Pancreas (tissue), 10 donors: ENCODE measurements at regions of chr7 and their contacts with region 1.

Region 1: GRCh38 chr7:44240983-44241510 is 40.3 kb downstream of the YKT6 start:
- DNase-seq: peak; percentile 75 to 91 (median 79)
- ATAC-seq: peak; percentile 97 to 99 (median 98)
- H3K4me3 ChIP-seq: peak overlapping the region in 2 of 4 donors; percentile 31 to 33
- H3K27ac ChIP-seq: no peak overlapping the region
- H3K4me1 ChIP-seq: no peaks in the 10 kb centered on the region
- H3K27me3 ChIP-seq: no peaks in the 10 kb centered on the region
- CTCF ChIP-seq: peak; percentile 43 to 70 (median 54)

Region 2: DNA sequence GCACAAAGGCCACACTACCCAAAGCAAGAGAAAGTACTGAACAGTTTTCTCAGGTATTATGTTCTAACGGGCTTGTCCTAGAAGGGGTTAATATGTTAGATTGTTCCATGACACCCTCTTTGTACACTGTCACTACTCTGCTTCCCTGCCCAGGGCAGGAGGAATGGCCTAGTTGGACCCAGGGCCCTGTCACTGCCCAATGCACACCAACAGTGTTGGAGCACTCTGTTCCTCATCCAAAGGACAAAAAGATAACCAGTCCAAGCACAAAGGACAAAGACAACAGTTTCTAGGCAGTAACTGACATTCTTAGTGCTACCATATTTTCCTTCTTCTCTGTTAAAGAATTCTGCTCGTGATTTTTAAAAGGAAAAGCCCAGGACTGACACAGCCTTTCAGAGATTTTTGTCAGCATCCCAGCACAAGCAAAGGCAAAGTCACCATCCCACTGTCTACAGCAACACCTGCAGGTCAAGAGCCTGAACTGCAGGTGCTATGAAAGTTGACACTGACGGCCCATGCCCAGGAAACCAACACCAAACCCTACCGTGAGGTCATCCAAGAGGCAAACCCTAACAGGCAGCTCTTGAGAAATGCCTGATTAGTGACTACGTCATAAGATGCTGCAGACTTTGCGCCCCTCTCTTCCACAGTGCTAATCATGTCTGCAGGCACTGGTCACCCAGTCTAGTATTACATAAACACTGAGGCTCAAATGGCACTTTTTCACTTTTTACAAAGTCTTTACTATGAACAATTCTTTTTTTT is 236.2 kb after region 1 on chr7:
- intact Hi-C with region 1: loop called in 2 of 3 experiments (anchors 5 kb)
- DNase-seq: peak in 5 of 6 donors; percentile 17 to 67 (median 40)
- ATAC-seq: peak; percentile 84 to 98 (median 96)
- H3K4me3 ChIP-seq: no peak overlapping the region
- H3K27ac ChIP-seq: no peak overlapping the region
- H3K4me1 ChIP-seq: peaks cover 0 to 2% (median 0%) of the 10 kb centered on the region in 3 donors
- H3K27me3 ChIP-seq: no peaks in the 10 kb centered on the region
- CTCF ChIP-seq: peak; percentile 69 to 82 (median 74)

Region 3: DNA sequence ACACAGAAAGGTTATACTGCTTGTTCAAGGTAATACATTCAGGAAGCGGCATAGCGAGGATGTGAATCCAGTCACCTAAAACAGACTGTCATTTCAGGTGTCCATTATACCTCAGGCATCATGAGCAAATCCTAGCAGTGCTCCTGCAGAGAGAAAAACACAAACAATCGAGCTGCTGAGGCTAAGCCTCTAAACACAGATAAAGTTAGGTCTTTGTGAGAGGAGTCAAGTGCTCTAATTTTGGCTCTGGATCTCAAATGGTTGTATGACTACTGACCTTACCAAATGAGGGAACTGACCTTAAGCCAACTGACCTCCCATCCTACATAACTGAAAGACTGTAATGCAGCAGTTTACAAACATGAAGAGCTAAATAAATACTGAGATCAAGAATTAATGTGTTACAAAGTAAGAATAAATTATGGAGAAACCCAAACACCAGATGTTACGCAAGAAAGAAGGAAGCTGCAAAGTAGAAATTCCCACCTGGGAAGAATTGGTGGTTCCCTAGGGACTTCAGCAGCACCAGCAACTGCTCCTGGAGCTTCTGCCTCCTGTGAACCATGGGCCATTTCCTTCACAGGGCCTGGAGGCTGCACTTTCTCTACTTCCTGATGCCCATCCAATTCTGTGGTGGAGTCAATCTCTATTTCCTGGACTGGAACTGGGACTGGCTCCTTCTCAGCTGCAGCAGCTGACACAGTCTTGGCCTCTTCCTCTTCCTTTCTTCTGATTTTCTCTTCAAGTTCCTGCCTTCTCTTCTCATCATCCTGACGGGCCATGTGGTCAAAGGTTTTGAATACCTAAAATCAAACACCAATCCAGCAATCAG is 243.7 kb after region 1 on chr7:
- intact Hi-C with region 1: loop called in 2 of 3 experiments (anchors 5 kb)
- DNase-seq: no peak
- ATAC-seq: peak in 2 of 4 donors; percentile 21 to 43
- H3K4me3 ChIP-seq: no peak overlapping the region
- H3K27ac ChIP-seq: no peak overlapping the region
- H3K4me1 ChIP-seq: peaks cover 19 to 44% (median 22%) of the 10 kb centered on the region in 3 donors
- H3K27me3 ChIP-seq: no peaks in the 10 kb centered on the region
- CTCF ChIP-seq: no peak

Region 4: DNA sequence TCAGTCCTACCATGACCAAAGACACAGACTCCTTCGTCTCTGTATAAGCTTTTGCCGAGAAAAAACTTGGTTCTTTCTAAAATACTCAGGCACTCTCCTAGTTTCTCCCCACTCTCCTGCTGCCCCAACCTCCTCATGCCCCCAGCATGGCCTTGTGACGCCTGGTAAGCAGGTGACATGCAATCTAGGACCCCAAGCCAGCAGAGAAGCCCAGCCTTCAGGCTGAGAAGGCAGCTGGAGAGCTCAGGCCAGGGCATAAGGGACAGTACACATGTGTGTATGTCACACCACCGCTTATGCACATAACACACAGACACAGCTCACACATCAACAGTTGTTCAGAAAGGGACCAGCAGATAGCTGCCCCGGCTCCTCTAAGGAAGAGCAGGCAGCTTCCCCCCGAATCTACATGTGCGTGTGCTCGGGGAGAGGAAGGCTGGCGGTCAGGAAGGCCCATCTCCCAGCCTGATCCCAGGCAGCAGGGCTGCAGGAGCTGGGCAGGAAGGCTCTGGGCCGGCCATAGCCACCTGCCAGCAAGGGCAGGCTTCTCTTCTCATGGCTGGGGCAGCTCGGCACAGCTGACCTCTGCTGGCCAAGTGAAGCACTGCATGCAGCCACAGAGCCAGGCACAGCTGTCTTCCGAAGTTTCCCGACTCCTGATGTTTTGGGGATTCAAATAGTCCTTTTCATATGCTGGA is 324.2 kb after region 1 on chr7:
- intact Hi-C with region 1: loop called in 2 of 3 experiments (anchors 2 to 10 kb)
- DNase-seq: peak in 5 of 6 donors; percentile 48 to 89 (median 78)
- ATAC-seq: peak; percentile 82 to 98 (median 92)
- H3K4me3 ChIP-seq: no peak overlapping the region
- H3K27ac ChIP-seq: no peak overlapping the region
- H3K4me1 ChIP-seq: no peaks in the 10 kb centered on the region
- H3K27me3 ChIP-seq: no peaks in the 10 kb centered on the region
- CTCF ChIP-seq: peak; percentile 95 to 98 (median 97)